H1 (cell line): ENCODE measurements at regions of chr3 and their contacts with region 1.

Region 1: GRCh38 chr3:129026728-129027543 is 25.8 kb downstream of the EFCC1 start:
- DNase-seq: peak; percentile 73 to 81
- H3K4me3 ChIP-seq: peak overlapping the region in 3 of 4 experiments; percentile 11 to 52 (median 14); a peak in 6 of 8 replicates
- H3K27ac ChIP-seq: no peak overlapping the region
- H3K4me1 ChIP-seq: peaks cover 0 to 4% (median 0%) of the 10 kb centered on the region in 4 experiments; a peak in 3 of 7 replicates
- H3K27me3 ChIP-seq: peaks cover 5 to 23% (median 19%) of the 10 kb centered on the region in 4 experiments
- CTCF ChIP-seq: peak; percentile 27 to 42 (median 32)
- EP300 ChIP-seq: no peak
- POLR2A ChIP-seq: no peak
- RAD21 ChIP-seq: peak in 1 of 2 experiments; percentile 28; a peak in 2 of 4 replicates

Region 2: DNA sequence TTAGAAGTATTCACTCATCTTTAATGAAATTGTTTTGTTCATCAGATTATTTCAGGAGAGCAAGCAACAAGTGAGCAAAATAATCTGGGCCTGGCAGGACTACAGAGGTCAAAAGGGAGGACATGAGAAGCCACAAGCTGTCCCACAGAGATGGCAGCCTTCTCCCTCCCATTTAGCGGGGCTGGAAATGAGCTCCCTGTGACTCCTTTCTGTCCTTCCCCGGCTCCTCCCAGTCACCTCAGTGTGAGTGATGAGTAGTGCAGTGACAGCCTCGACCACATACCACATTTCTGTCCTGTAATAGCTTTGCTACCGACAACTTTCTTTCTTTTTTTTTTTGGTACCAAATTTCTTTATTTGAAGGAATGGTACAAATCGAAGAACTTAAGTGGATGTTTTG is 263.0 kb before region 1 on chr3:
- CTCF ChIA-PET with region 1: no interaction called
- POLR2A ChIA-PET with region 1: no interaction called
- DNase-seq: no peak
- H3K4me3 ChIP-seq: no peak overlapping the region
- H3K27ac ChIP-seq: no peak overlapping the region
- H3K4me1 ChIP-seq: peaks cover 0 to 2% (median 0%) of the 10 kb centered on the region in 4 experiments; a peak in 3 of 7 replicates
- H3K27me3 ChIP-seq: no peaks in the 10 kb centered on the region
- CTCF ChIP-seq: no peak
- EP300 ChIP-seq: no peak
- POLR2A ChIP-seq: no peak
- RAD21 ChIP-seq: no peak

Region 3: DNA sequence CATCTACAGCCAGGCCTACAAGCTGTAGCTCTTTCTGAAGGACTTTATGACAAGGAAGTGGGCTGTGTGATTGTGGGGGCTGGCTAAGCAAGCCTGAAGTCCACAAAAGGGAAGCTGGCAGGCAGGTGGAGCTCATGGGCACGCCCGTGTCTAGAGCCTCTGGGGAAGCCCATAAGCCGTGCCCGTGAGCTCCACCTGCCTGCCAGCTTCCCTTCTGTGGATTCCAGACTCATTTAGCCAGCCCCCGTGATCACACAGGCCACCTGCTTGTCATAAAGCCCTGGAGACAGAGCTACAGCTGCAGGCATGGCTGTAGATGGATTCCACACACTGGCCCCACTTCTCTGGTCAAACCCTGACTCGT is 10.6 kb before region 1 on chr3:
- CTCF ChIA-PET with region 1: interaction called, 25 read pairs
- POLR2A ChIA-PET with region 1: interaction called, 4 read pairs
- DNase-seq: no peak
- H3K4me3 ChIP-seq: no peak overlapping the region
- H3K27ac ChIP-seq: no peak overlapping the region
- H3K4me1 ChIP-seq: peaks cover 0 to 7% (median 1%) of the 10 kb centered on the region in 4 experiments; a peak in 2 of 7 replicates
- H3K27me3 ChIP-seq: peaks cover 0 to 4% (median 0%) of the 10 kb centered on the region in 4 experiments; a peak in 1 of 7 replicates
- CTCF ChIP-seq: no peak
- EP300 ChIP-seq: no peak
- POLR2A ChIP-seq: no peak
- RAD21 ChIP-seq: no peak; a peak in 1 of 4 replicates

Region 4: DNA sequence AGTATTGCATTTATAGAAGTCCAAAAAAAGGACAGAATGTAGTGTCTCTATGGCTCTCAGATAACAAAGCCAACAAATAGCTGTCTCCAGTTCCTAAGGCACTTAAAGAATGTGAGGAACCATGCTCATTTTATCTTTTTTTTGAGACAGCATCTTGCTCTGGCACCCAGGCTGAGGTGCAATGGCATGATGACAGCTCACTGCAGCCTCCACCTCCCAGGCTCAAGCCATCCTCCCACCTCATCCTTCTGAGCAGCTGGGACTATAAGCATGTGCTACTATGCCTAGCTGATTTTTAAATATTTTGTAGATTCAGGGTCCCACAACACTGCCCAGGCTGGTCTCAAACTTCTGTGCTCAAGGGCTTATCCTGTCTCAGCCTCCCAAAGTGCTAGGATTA is 117.8 kb after region 1 on chr3:
- CTCF ChIA-PET with region 1: no interaction called
- POLR2A ChIA-PET with region 1: no interaction called
- DNase-seq: no peak
- H3K4me3 ChIP-seq: no peak overlapping the region
- H3K27ac ChIP-seq: no peak overlapping the region
- H3K4me1 ChIP-seq: no peaks in the 10 kb centered on the region
- H3K27me3 ChIP-seq: no peaks in the 10 kb centered on the region
- CTCF ChIP-seq: no peak
- EP300 ChIP-seq: no peak
- POLR2A ChIP-seq: no peak
- RAD21 ChIP-seq: no peak

Region 5: GRCh38 chr3:129183569-129184395 is 156.8 kb after region 1 on chr3 and contains the start of gene CNBP:
- CTCF ChIA-PET with region 1: no interaction called
- POLR2A ChIA-PET with region 1: no interaction called
- DNase-seq: peak in 1 of 2 experiments; percentile 91
- H3K4me3 ChIP-seq: peak within 1 kb of the TSS; percentile 77 to 100 (median 98)
- H3K27ac ChIP-seq: peak within 1 kb of the TSS; percentile 99
- H3K4me1 ChIP-seq: peaks cover 0 to 4% (median 0%) of the 10 kb centered on the region in 4 experiments; a peak in 1 of 7 replicates
- H3K27me3 ChIP-seq: no peaks in the 10 kb centered on the region
- CTCF ChIP-seq: no peak; a peak in 1 of 4 replicates
- EP300 ChIP-seq: no peak
- POLR2A ChIP-seq: peak in 1 of 2 experiments; percentile 91; a peak in 2 of 3 replicates
- RAD21 ChIP-seq: no peak
- total RNA-seq, gene CNBP: 351 and 371 TPM in 2 replicates